Heart left ventricle (tissue), 16 donors: ENCODE measurements at regions of chr6 and their contacts with region 1.

Region 1: GRCh38 chr6:83221889-83222479 is 28.8 kb downstream of the RWDD2A start:
- DNase-seq: no peak
- ATAC-seq: no peak
- H3K4me3 ChIP-seq: no peak overlapping the region
- H3K27ac ChIP-seq: no peak overlapping the region
- H3K4me1 ChIP-seq: no peaks in the 10 kb centered on the region
- H3K27me3 ChIP-seq: no peaks in the 10 kb centered on the region
- CTCF ChIP-seq: peak in 11 of 12 donors; percentile 36 to 69 (median 59)
- POLR2A ChIP-seq: no peak

Region 2: GRCh38 chr6:83417880-83418663 is 196.1 kb after region 1 on chr6:
- intact Hi-C with region 1: loop called in 5 of 10 experiments (anchors 10 kb)
- DNase-seq: no peak
- ATAC-seq: no peak
- H3K4me3 ChIP-seq: no peak overlapping the region
- H3K27ac ChIP-seq: no peak overlapping the region
- H3K4me1 ChIP-seq: peaks cover 0 to 4% (median 0%) of the 10 kb centered on the region in 12 donors
- H3K27me3 ChIP-seq: no peaks in the 10 kb centered on the region
- CTCF ChIP-seq: peak; percentile 18 to 55 (median 46)
- POLR2A ChIP-seq: no peak

Region 3: DNA sequence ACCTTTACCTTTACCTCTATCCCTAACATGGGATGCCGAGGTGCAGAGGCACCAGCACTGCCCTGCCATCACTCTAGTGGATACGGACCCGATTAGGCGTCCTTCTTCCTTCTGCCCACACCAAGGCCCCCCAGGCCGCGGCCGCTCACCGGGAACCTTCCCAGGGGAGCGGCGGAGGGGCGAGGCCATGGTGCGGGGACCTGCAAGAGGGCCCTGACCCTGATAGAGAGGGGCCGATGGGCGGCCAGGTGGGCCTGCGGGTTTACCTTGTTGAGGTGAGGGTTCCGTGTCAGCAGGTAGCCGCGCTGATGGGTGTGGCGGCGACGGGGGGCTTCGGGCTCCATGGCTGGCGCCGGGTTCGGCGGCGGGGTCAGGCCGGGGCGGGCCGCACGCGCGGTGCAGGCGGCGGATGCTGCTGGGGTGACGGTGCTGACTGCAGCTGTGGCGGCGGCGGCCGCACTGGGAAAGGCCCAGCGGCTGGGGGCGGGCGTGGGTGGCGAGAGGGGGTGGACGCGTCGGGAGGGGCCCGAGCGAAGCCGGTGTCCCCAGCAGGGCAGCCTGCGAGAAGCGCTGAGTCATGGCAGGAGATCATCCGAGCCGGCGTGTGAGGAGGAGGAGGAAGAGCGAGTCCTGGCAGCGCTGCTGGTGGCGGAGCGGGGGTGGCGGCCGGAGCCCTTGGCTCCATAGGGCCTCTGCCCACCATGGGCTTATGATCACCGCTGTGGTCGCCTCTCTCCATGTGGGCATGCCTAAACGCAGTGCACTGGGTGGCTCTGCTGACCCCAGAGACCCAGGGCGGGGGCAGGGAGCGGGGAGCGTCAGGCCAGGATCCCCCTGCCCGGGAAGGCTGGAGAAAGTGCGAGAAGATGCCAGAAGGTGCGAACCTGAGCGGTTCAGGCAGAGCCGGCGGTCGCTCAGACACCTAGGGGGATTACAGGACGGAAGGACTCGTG is 208.9 kb after region 1 on chr6 and contains the start of gene ME1:
- intact Hi-C with region 1: loop called in 1 of 10 experiments (anchors 10 kb)
- DNase-seq: peak; percentile 77 to 90 (median 88)
- ATAC-seq: peak; percentile 80 to 98 (median 94)
- H3K4me3 ChIP-seq: peak within 1 kb of the TSS; percentile 51 to 88 (median 68)
- H3K27ac ChIP-seq: peak within 1 kb of the TSS in 11 of 12 donors; percentile 51 to 81 (median 71)
- H3K4me1 ChIP-seq: peaks cover 0 to 15% (median 6%) of the 10 kb centered on the region in 12 donors
- H3K27me3 ChIP-seq: no peaks in the 10 kb centered on the region
- CTCF ChIP-seq: peak in 1 of 12 donors; percentile 18
- POLR2A ChIP-seq: peak in 1 of 2 donors; percentile 50
- total RNA-seq, gene ME1: 15.2 to 28.5 (median 19.6) TPM